ENCODE measurements at regions of chr19 and their contacts with region 1.

Region 1: GRCh38 chr19:29263305-29264135 is 50.6 kb upstream of the UQCRFS1 start:
- DNase-seq: peak; percentile 72
- H3K4me3 Mint-ChIP-seq: no peak overlapping the region
- H3K27ac Mint-ChIP-seq: no peak overlapping the region
- H3K4me1 Mint-ChIP-seq: no peaks in the 10 kb centered on the region
- H3K27me3 Mint-ChIP-seq: peaks cover 19% of the 10 kb centered on the region

Region 2: DNA sequence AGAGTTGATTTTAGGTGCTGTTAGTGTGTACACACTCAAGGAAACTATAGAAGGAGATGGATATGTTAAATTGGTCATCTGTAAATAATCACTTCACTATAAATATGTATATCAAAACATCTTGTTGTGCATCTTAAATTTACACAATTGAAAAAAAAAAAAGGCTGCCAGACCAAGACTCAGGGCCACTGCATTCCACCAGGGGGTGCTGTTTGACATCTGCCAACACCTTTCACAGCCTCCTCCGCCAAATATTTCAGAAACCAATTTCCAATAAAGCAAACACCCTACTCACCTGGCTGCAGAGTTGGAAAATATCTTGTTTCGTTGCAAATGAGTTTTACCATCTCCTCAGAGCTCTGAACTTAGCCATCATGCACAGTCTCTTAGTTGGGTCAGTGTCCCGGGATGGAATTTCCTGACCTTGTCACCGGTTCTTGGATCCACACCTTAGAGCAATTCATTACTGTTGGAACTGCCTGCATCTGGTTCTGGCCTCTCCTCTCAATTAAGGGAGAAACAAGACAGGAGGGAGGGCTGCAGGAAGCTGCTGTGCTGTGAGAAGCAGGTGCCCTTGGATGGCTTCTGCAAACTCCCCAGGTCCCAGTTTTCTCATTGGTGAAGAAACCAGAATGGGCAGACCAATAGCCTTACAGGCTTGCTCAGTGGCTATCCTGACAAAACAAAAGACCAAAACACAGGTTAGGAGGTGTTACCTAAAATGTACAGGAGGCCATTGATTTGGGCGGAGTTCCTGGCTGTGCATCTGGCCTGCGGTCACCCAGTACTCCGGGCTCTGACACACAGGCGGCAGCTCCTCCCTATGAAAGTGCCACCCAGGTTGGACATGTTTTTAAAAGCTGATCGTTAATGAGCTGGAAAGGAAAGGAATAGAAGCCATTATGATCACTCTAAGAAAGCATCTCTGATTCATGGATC is 797.1 kb before region 1 on chr19:
- CTCF ChIA-PET with region 1: interaction called, 4 read pairs
- intact Hi-C with region 1: loop called (anchors 5 kb)
- DNase-seq: peak; percentile 77
- H3K4me3 Mint-ChIP-seq: no peak overlapping the region
- H3K27ac Mint-ChIP-seq: no peak overlapping the region
- H3K4me1 Mint-ChIP-seq: peaks cover 14% of the 10 kb centered on the region
- H3K27me3 Mint-ChIP-seq: peaks cover 6% of the 10 kb centered on the region

Region 3: DNA sequence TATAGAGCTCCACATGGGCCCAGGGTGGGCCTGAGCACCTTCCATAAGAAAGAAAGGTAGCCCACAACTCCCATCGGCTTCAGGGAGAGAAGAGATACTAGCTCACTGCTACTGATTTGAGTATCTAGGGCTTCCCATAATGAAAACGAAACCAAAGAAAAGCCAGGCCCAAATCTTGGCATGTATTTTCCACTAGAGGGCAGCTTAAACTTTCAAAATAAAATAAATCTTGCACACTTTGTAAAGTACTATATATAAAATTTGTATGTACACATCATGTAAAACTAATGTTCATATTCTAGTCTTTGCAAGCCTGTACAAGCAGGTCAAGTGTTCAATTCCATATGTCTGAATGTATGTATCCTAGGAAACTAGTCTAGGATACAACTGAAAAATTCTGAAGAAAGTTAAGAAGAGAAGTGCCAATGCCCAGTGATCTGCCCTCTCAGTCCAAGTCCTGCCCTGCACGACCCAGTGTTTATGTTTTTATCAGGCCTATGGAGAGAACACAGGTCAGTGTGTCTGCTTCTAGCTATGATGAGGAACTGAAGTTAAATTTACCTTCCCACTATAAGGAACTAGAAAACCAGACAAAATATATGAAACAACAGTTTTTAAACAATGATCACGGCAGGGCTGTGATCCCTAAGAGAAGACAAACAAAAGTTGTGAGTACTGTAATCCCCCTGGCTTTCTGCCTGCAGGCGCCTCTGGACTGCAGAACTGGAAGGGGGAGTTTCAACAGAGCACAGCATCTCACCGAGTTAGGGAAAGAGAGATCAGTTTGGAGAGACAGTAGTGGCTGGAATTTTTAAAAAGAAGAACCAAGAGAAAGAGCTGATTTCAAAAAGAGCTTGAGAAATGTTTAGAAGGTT is 526.3 kb before region 1 on chr19:
- CTCF ChIA-PET with region 1: interaction called, 5 read pairs
- intact Hi-C with region 1: loop called (anchors 1 kb)
- DNase-seq: peak; percentile 31
- H3K4me3 Mint-ChIP-seq: no peak overlapping the region
- H3K27ac Mint-ChIP-seq: no peak overlapping the region
- H3K4me1 Mint-ChIP-seq: peaks cover 4% of the 10 kb centered on the region
- H3K27me3 Mint-ChIP-seq: peaks cover 7% of the 10 kb centered on the region

Region 4: DNA sequence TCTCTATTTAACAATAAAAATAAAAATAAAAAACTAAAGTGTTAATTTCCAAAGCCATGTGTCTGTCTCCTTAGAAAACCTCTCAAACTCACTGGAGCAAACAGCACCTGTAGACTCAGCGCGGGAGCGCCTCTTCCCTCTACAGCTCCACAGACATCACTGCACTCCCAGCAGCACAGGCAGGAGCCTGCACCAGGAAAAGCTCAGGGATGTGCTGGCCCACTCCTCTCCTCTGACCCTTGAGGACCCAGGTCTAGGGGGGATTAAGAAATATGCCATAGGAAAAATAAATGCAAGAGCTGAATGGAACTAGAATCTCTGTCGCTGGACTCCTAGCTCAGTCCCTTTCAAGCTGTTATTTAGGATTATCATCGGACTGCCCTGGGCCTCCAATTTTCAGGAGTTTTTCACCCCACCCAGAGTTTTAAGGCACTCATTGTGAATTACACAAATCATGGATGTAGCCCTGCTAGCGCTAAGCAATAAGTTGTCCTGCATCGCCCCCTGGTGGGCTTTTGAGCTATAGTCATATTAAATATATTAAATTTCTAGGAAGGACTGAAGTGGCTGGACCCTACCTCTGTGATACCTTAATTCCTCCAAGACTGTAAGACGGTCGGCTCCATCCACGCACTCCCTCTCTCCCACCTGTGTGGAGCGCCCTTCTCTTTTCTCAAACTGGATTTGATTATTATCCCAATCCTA is 384.5 kb before region 1 on chr19:
- CTCF ChIA-PET with region 1: interaction called, 3 read pairs
- intact Hi-C with region 1: loop called (anchors 10 kb)
- DNase-seq: peak; percentile 75
- H3K4me3 Mint-ChIP-seq: no peak overlapping the region
- H3K27ac Mint-ChIP-seq: no peak overlapping the region
- H3K4me1 Mint-ChIP-seq: no peaks in the 10 kb centered on the region
- H3K27me3 Mint-ChIP-seq: peaks cover 13% of the 10 kb centered on the region

Region 5: DNA sequence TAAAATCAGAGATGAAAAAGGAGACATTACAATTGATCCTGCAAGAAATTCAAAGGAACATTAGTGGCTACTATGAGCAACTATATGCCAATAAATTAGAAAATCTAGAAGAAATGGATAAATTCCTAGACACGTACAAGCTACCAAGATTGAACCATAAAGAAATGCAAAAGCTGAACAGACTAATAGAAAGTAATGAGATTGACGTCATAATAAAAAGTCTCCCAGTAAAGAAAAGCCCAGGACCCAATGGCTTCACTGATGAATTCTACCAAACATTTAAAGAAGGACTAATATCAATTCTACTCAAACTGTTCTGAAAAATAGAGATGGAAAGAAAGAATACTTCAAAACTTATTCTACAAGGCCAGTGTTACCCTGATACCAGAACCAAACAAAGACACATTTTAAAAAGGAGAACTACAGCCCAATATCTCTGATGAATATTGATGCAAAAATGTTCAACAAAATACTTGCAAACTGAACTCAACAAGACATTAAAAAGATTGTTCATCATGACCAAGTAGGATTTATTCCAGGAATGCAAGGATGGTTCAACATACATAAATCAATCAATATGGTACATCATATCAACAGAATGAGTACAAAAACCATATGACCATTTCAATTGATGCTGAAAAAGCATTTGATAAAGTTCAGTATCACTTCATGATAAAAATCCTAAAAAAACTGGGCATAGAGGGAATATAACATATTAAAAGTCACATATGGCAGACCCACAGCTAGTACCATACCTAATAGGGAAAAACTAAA is 86.4 kb before region 1 on chr19:
- CTCF ChIA-PET with region 1: no interaction called
- intact Hi-C with region 1: no loop called
- DNase-seq: no peak
- H3K4me3 Mint-ChIP-seq: no peak overlapping the region
- H3K27ac Mint-ChIP-seq: no peak overlapping the region
- H3K4me1 Mint-ChIP-seq: no peaks in the 10 kb centered on the region
- H3K27me3 Mint-ChIP-seq: no peaks in the 10 kb centered on the region